Panc1 (cell line): ENCODE measurements at regions of chrX and their contacts with region 1.

Region 1: GRCh38 chrX:49915361-49916222 is 6.8 kb upstream of the CLCN5 start:
- DNase-seq: peak; percentile 45
- ATAC-seq: peak; percentile 94
- H3K4me3 ChIP-seq: no peak overlapping the region
- H3K27ac ChIP-seq: no peak overlapping the region
- H3K4me1 ChIP-seq: no peaks in the 10 kb centered on the region
- H3K27me3 ChIP-seq: no peaks in the 10 kb centered on the region; the same call in 1 of the 2 replicates
- CTCF ChIP-seq: peak; percentile 85

Region 2: GRCh38 chrX:50117476-50117875 is 201.9 kb after region 1 on chrX:
- CTCF ChIA-PET with region 1: no interaction called
- POLR2A ChIA-PET with region 1: no interaction called
- in situ Hi-C with region 1: no loop called
- intact Hi-C with region 1: no loop called
- DNase-seq: no peak
- ATAC-seq: no peak
- H3K4me3 ChIP-seq: no peak overlapping the region
- H3K27ac ChIP-seq: no peak overlapping the region
- H3K4me1 ChIP-seq: no peaks in the 10 kb centered on the region
- H3K27me3 ChIP-seq: no peaks in the 10 kb centered on the region
- CTCF ChIP-seq: no peak

Region 3: DNA sequence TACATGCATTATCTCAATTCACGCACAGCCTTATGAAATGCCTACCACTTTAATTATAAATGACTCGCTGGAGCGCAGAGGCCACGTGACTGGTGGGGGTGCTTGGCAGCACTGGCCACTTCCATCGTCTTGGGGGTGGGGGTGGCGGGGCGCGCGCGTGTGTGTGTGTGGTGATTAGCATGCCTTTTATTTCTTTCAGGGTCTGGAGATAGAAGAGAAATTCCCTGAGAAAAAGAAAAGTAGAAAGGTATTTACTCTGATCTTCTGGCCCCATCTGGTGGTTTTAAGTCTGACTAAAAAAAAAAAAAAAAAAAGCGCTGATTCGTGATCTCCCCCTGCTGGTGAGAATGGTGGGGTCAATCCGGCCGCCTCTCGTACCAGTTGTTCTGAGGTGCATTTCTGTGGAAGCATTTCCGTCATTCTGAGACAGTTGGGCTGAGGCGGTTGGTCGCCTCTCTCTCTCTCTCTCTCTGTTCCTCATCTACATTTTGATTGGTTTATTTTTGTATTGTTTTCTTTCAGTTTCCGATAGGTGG is 288.8 kb after region 1 on chrX and contains the start of gene CCNB3:
- CTCF ChIA-PET with region 1: interaction called, 5 read pairs
- POLR2A ChIA-PET with region 1: interaction called, 4 read pairs
- in situ Hi-C with region 1: no loop called
- intact Hi-C with region 1: loop called (anchors 5 kb)
- DNase-seq: peak; percentile 36
- ATAC-seq: peak; percentile 93
- H3K4me3 ChIP-seq: peak within 1 kb of the TSS; percentile 32 to 38
- H3K27ac ChIP-seq: peak within 1 kb of the TSS; percentile 59
- H3K4me1 ChIP-seq: no peaks in the 10 kb centered on the region; the same call in 1 of the 2 replicates
- H3K27me3 ChIP-seq: no peaks in the 10 kb centered on the region
- CTCF ChIP-seq: peak; percentile 80
- total RNA-seq, gene CCNB3: 0.64 TPM

Region 4: DNA sequence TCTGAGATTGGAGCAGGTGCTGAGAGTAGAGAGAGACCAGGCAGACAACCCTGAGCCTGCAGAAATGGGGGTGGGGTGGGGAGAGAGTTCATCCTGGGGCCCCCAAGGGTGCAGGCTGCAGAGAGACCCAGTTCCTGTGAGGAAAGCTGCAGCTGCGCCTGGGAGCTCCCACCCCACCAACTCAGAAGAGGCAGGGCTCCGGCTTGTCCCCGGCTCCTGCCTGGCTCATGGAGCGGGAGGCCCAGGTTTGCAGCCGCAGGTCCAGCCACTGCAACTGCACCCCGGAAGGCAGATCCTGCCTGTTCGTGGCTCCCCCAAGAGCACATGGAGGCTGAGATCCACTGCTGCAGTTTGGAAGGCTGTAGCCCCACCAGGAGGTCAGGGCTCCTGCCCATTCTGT is 599.2 kb after region 1 on chrX:
- CTCF ChIA-PET with region 1: interaction called, 15 read pairs
- POLR2A ChIA-PET with region 1: no interaction called
- in situ Hi-C with region 1: no loop called
- intact Hi-C with region 1: no loop called
- DNase-seq: no peak
- ATAC-seq: no peak
- H3K4me3 ChIP-seq: no peak overlapping the region
- H3K27ac ChIP-seq: no peak overlapping the region
- H3K4me1 ChIP-seq: no peaks in the 10 kb centered on the region
- H3K27me3 ChIP-seq: no peaks in the 10 kb centered on the region
- CTCF ChIP-seq: no peak

Region 5: GRCh38 chrX:50579955-50580354 is 664.4 kb after region 1 on chrX:
- CTCF ChIA-PET with region 1: no interaction called
- POLR2A ChIA-PET with region 1: no interaction called
- in situ Hi-C with region 1: no loop called
- intact Hi-C with region 1: loop called (anchors 10 kb)
- DNase-seq: peak; percentile 45
- ATAC-seq: peak; percentile 88
- H3K4me3 ChIP-seq: no peak overlapping the region
- H3K27ac ChIP-seq: no peak overlapping the region
- H3K4me1 ChIP-seq: no peaks in the 10 kb centered on the region
- H3K27me3 ChIP-seq: no peaks in the 10 kb centered on the region
- CTCF ChIP-seq: peak; percentile 69

Region 6: DNA sequence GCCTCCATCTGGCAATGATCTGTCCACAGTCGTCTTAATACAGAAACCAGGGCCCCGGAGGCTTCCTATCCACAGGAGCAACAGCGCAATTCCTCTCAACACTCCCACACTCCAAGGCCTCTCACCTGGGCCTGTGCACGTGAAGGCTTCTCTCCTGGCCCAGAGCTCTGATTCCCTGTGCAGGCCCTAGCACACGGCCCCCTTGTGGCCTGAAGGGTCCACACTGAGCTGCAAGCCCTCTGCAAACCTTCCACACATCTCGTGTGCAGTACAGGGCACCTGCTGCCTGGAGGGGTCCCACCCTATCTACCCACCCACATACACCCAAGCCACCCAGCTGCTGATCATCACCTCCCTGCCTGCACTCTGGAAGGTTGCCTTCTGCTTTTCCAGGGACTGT is 1267.0 kb after region 1 on chrX:
- CTCF ChIA-PET with region 1: no interaction called
- POLR2A ChIA-PET with region 1: no interaction called
- in situ Hi-C with region 1: no loop called
- intact Hi-C with region 1: no loop called
- DNase-seq: no peak
- ATAC-seq: no peak
- H3K4me3 ChIP-seq: no peak overlapping the region
- H3K27ac ChIP-seq: no peak overlapping the region
- H3K4me1 ChIP-seq: no peaks in the 10 kb centered on the region
- H3K27me3 ChIP-seq: no peaks in the 10 kb centered on the region
- CTCF ChIP-seq: 0 out of 2 replicates have a peak, but pooled peaks have one; percentile 8